ENCODE measurements at regions of chr11 and their contacts with region 1.

Region 1: GRCh38 chr11:69249311-69250185 is 44.4 kb upstream of the MYEOV start:
- DNase-seq: peak in 1 of 2 donors; percentile 46
- H3K4me3 ChIP-seq: no peak overlapping the region
- H3K27ac ChIP-seq: no peak overlapping the region
- H3K4me1 ChIP-seq: no peaks in the 10 kb centered on the region
- H3K27me3 ChIP-seq: no peaks in the 10 kb centered on the region
- CTCF ChIP-seq: no peak
- POLR2A ChIP-seq: no peak

Region 2: DNA sequence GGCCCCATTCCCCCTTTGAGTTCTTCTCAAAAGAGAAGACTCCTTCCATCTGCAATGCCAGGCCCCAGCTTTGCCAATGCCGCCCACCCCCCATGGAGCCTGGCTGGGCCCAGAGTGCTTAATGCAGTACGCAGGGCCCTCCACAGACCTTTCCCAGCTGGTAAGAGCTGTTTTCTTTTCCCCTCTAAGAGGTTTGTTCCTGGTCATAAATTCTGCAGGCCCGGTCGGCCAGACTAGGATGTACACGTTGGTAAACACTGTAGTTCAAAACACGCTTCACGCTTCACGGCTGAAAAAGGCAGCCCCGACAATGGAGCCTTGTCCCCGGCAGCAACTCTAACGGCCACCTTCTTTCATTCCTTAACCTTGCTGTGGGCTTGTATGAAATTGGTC is 15.8 kb before region 1 on chr11:
- intact Hi-C with region 1: no loop called
- DNase-seq: peak in 1 of 2 donors; percentile 43
- H3K4me3 ChIP-seq: no peak overlapping the region
- H3K27ac ChIP-seq: no peak overlapping the region
- H3K4me1 ChIP-seq: no peaks in the 10 kb centered on the region
- H3K27me3 ChIP-seq: no peaks in the 10 kb centered on the region
- CTCF ChIP-seq: no peak
- POLR2A ChIP-seq: no peak

Region 3: GRCh38 chr11:70405682-70406395 is 1156.3 kb after region 1 on chr11:
- intact Hi-C with region 1: loop called (anchors 5 kb)
- DNase-seq: no peak
- H3K4me3 ChIP-seq: no peak overlapping the region
- H3K27ac ChIP-seq: no peak overlapping the region
- H3K4me1 ChIP-seq: peaks cover 0 to under 1% of the 10 kb centered on the region in 2 donors
- H3K27me3 ChIP-seq: no peaks in the 10 kb centered on the region
- CTCF ChIP-seq: no peak
- POLR2A ChIP-seq: no peak